ENCODE measurements at regions of chr19 and their contacts with region 1.

Region 1: DNA sequence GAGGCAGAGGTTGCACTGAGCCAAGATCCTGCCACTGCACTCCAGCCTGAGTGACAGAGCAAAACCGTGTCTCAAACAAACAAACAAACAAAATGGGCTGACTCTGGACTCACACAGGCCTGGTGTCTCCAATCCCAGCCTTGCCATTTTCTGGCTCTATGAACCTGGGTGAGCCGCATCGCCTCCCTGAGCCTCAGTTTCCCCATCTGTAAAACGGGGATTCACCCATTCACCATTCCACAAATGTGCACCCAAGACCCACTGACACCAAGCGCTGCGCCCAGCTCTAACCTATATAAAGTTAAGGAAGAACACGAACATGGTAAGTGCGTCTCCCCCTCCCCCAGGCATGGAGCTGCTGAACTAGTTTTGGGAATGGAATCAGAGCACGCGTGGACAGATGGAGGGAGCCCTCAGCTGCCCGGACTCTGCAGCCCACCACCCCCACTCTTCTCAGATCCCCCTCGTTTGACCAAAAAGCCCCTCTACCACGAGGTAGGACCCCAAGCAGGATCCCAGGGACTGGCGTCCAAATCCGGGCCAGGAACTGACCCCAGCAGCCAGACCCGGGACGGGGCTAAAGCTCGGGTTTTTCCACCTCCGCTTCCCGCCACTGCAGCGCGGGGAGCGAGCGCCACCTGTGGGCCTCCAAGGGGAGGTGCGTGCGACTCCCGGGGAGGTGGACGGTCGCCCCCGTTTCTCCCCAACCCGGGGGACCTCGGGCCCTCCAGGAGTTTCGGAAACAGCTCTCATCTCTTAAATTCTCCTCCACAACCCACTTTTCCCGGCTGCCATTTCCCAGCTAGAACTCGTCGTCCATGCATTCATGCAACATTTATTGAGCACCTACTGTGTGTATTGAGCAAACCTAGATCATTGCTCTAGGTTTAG is 33.0 kb upstream of the ADGRE5 start:
- DNase-seq: peak; percentile 89
- CTCF ChIP-seq: peak; percentile 95

Region 2: DNA sequence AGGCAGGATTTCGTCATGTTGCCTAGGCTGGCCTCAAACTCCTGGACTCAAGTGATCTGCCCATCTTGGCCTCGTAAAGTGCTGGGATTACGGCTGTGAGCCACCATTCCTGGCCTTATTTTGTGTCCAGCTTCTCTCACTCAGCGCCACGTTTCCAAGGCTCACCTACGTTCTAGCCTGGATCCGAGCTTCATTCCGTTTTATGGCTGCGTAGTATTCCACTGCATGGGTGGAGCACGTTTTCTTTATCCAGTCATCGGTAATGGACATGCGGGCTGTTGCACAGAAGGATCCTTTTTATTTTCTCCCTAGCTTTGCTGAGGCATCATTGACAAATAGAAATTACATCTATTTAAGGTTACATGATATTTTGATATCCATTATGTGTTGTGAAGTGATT is 158.8 kb before region 1 on chr19:
- CTCF ChIA-PET with region 1: interaction called, 52 read pairs
- POLR2A ChIA-PET with region 1: no interaction called
- DNase-seq: no peak
- CTCF ChIP-seq: no peak

Region 3: GRCh38 chr19:14337510-14337909 is 10.7 kb before region 1 on chr19:
- CTCF ChIA-PET with region 1: interaction called, 30 read pairs
- POLR2A ChIA-PET with region 1: no interaction called
- DNase-seq: no peak
- CTCF ChIP-seq: no peak

Region 4: DNA sequence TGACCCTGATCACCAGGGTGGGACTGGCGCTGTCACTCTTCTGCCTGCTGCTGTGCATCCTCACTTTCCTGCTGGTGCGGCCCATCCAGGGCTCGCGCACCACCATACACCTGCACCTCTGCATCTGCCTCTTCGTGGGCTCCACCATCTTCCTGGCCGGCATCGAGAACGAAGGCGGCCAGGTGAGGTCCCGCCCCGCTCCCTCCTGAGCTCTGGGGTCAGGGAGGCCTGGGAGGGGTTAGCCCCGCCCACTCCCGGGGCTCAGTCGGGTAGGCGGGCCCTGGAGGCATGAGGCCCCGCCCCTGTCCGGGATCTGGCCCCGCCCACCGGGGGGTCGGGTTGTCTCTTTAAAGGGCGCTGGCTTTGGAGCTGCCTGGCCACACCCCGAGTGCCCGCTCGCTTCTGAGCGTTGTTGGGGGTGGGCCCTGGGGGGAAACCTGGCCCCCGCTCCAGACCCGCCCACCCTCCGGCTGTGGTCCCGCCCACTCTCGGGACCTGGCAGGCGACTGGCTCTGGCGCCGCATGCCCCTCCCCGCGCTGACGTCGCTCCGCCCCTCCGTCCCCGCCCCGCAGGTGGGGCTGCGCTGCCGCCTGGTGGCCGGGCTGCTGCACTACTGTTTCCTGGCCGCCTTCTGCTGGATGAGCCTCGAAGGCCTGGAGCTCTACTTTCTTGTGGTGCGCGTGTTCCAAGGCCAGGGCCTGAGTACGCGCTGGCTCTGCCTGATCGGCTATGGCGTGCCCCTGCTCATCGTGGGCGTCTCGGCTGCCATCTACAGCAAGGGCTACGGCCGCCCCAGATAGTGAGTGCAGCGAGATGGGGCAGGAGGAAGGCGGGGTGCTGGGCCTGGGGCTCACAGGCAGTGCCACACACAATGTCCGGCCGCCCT is 57.8 kb after region 1 on chr19:
- CTCF ChIA-PET with region 1: interaction called, 11 read pairs
- POLR2A ChIA-PET with region 1: no interaction called
- DNase-seq: peak; percentile 98
- CTCF ChIP-seq: peak; percentile 91

Measured in GM10248 (cell line).